Heart left ventricle (tissue), 16 donors: ENCODE measurements at regions of chr15 and their contacts with region 1.

Region 1: GRCh38 chr15:32919749-32920414 is 202.1 kb downstream of the GREM1 start:
- DNase-seq: no peak
- ATAC-seq: no peak
- H3K4me3 ChIP-seq: no peak overlapping the region
- H3K27ac ChIP-seq: no peak overlapping the region
- H3K4me1 ChIP-seq: no peaks in the 10 kb centered on the region
- H3K27me3 ChIP-seq: no peaks in the 10 kb centered on the region
- CTCF ChIP-seq: no peak
- POLR2A ChIP-seq: no peak

Region 2: GRCh38 chr15:32683906-32684584 is 235.8 kb before region 1 on chr15:
- intact Hi-C with region 1: loop called in 1 of 10 experiments (anchors 10 kb)
- DNase-seq: peak in 2 of 5 donors; percentile 17 to 21
- ATAC-seq: peak in 3 of 4 donors; percentile 66 to 77 (median 71)
- H3K4me3 ChIP-seq: no peak overlapping the region
- H3K27ac ChIP-seq: no peak overlapping the region
- H3K4me1 ChIP-seq: peaks cover 0 to 24% (median 0%) of the 10 kb centered on the region in 12 donors
- H3K27me3 ChIP-seq: no peaks in the 10 kb centered on the region
- CTCF ChIP-seq: no peak
- POLR2A ChIP-seq: no peak

Region 3: GRCh38 chr15:32838820-32839219 is 81.1 kb before region 1 on chr15:
- intact Hi-C with region 1: no loop called
- DNase-seq: no peak
- ATAC-seq: peak in 1 of 4 donors; percentile 34
- H3K4me3 ChIP-seq: no peak overlapping the region
- H3K27ac ChIP-seq: no peak overlapping the region
- H3K4me1 ChIP-seq: no peaks in the 10 kb centered on the region
- H3K27me3 ChIP-seq: peaks cover 0 to 10% (median 0%) of the 10 kb centered on the region in 9 donors
- CTCF ChIP-seq: no peak
- POLR2A ChIP-seq: no peak

Region 4: DNA sequence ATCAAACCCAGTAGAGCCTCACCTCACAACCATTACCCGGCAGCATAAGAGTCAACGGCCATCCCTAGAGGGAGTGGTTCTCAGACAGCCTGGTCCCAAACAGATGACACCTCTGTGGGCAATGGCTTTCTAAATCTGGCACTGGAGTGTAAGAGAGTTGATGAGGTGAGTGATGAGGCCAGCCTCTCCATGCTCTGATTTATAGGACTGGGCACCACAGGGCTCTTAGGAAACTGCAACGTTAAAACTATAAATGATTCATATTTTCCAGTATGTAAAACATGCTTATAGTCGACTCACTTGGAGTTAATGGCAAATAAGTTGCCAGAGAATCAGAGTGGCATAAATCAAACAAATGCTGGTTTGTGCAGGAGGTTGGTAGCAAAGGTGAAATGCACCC is 14.4 kb before region 1 on chr15:
- intact Hi-C with region 1: loop called in 1 of 10 experiments (anchors 2 kb)
- DNase-seq: no peak
- ATAC-seq: no peak
- H3K4me3 ChIP-seq: no peak overlapping the region
- H3K27ac ChIP-seq: no peak overlapping the region
- H3K4me1 ChIP-seq: peaks cover 0 to 14% (median 0%) of the 10 kb centered on the region in 12 donors
- H3K27me3 ChIP-seq: no peaks in the 10 kb centered on the region
- CTCF ChIP-seq: no peak
- POLR2A ChIP-seq: no peak

Region 5: DNA sequence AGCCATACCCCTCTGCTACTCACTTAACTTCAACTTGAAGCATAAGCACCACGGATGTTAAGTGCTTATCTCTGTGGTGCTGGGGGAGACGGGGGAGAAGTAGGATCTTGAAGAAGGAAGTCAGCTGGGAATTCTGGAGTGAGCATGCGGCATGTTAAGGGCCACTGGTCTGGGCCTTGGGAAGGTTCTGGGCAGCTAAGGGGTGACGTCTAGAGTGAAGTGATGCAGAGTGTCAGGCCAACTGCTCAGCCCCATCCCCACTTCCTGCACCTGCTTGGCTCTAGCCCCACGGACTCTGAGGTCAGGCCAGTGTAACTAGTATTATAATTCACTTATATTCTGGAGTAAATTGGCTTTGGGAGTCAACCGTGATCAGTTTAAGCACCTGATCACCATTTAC is 46.0 kb after region 1 on chr15:
- intact Hi-C with region 1: loop called in 3 of 10 experiments (anchors 10 kb)
- DNase-seq: no peak
- ATAC-seq: no peak
- H3K4me3 ChIP-seq: no peak overlapping the region
- H3K27ac ChIP-seq: peak overlapping the region in 1 of 12 donors; percentile 2
- H3K4me1 ChIP-seq: no peaks in the 10 kb centered on the region
- H3K27me3 ChIP-seq: no peaks in the 10 kb centered on the region
- CTCF ChIP-seq: no peak
- POLR2A ChIP-seq: no peak

Region 6: GRCh38 chr15:32979710-32980109 is 59.8 kb after region 1 on chr15:
- intact Hi-C with region 1: loop called in 2 of 10 experiments (anchors 10 kb)
- DNase-seq: no peak
- ATAC-seq: no peak
- H3K4me3 ChIP-seq: no peak overlapping the region
- H3K27ac ChIP-seq: no peak overlapping the region
- H3K4me1 ChIP-seq: no peaks in the 10 kb centered on the region
- H3K27me3 ChIP-seq: no peaks in the 10 kb centered on the region
- CTCF ChIP-seq: no peak
- POLR2A ChIP-seq: no peak

Region 7: GRCh38 chr15:33194237-33194636 is 274.4 kb after region 1 on chr15:
- intact Hi-C with region 1: no loop called
- DNase-seq: no peak
- ATAC-seq: peak in 1 of 4 donors; percentile 2
- H3K4me3 ChIP-seq: peak overlapping the region; percentile 20 to 67 (median 54)
- H3K27ac ChIP-seq: no peak overlapping the region
- H3K4me1 ChIP-seq: peaks cover 0 to 13% (median 0%) of the 10 kb centered on the region in 12 donors
- H3K27me3 ChIP-seq: peaks cover 0 to 10% (median 0%) of the 10 kb centered on the region in 9 donors
- CTCF ChIP-seq: no peak
- POLR2A ChIP-seq: no peak

Region 8: DNA sequence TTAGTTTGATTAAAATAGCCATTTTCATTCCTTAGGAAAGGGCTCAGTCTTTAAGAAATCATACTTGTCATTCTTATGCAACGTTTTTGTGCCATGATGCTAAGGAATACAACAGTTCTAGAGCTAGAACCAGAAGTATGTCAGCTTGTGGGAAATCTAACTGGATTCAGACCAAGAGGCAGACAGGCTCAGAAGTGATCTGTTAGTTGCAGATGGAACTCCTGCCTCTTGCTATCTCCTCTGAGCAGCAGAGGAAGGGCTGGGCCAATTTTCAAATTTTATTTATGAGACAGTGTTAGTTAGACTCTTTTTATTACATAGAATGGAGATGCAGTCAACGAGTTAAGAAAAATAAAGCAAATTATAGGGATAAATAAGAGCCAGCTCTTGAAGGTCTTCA is 342.4 kb after region 1 on chr15:
- intact Hi-C with region 1: no loop called
- DNase-seq: no peak
- ATAC-seq: no peak
- H3K4me3 ChIP-seq: no peak overlapping the region
- H3K27ac ChIP-seq: no peak overlapping the region
- H3K4me1 ChIP-seq: no peaks in the 10 kb centered on the region
- H3K27me3 ChIP-seq: no peaks in the 10 kb centered on the region
- CTCF ChIP-seq: no peak
- POLR2A ChIP-seq: no peak